ENCODE measurements at regions of chr1 and their contacts with region 1.

Region 1: DNA sequence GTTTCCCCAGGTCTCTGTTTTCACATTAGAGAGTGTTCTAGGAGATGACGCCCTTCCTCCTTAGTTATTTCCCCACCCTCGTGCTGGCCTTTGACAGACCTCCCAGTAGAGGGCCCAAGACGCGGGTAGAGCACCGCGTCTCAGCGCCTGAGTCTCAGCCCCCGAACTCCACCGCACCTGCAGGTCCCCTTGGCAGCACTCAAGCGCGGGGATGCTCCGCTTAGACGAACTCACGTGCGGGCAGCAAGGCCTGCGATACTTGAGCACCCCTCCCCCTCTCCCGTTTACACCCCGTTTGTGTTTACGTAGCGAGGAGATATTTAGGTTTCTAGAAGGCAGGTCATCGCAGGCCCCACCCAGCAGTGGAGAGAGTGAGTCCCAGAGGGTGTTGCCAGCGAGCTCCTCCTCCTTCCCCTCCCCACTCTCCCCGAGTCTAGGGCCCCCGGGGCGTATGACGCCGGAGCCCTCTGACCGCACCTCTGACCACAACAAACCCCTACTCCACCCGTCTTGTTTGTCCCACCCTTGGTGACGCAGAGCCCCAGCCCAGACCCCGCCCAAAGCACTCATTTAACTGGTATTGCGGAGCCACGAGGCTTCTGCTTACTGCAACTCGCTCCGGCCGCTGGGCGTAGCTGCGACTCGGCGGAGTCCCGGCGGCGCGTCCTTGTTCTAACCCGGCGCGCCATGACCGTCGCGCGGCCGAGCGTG is at the start of gene CD55:
- DNase-seq: peak; percentile 99
- H3K4me3 Mint-ChIP-seq: peak within 1 kb of the TSS; percentile 96
- H3K27ac Mint-ChIP-seq: peak within 1 kb of the TSS; percentile 98
- H3K4me1 Mint-ChIP-seq: peaks cover 34% of the 10 kb centered on the region
- H3K27me3 Mint-ChIP-seq: no peaks in the 10 kb centered on the region
- total RNA-seq, gene CD55: 62.1 to 66.0 TPM

Region 2: GRCh38 chr1:206925106-206925736 is 396.0 kb before region 1 on chr1:
- CTCF ChIA-PET with region 1: no interaction called
- intact Hi-C with region 1: loop called (anchors 10 kb)
- DNase-seq: peak; percentile 78
- H3K4me3 Mint-ChIP-seq: no peak overlapping the region
- H3K27ac Mint-ChIP-seq: no peak overlapping the region
- H3K4me1 Mint-ChIP-seq: peaks cover 24% of the 10 kb centered on the region
- H3K27me3 Mint-ChIP-seq: no peaks in the 10 kb centered on the region

Region 3: DNA sequence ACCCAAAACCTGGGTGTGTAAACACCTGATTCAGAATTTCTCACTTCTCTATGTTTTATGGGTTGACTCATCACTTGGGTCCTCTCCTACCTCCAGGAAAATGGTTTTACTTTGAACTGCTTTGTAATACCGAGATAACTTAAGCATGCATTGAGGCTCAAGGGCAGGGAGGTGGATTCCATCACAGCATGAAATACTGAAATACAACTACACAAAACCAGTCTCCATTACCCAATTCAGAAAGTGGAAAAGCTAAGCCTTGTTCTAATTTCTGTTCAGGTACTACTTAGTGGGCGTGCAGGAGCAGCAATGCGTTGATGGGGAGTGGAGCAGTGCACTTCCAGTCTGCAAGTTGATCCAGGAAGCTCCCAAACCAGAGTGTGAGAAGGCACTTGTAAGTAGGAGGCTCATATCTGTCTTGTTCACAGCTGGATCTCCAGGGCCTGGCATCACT is 223.3 kb before region 1 on chr1:
- CTCF ChIA-PET with region 1: no interaction called
- intact Hi-C with region 1: loop called (anchors 1 kb)
- DNase-seq: peak; percentile 65
- H3K4me3 Mint-ChIP-seq: no peak overlapping the region
- H3K27ac Mint-ChIP-seq: peak overlapping the region; percentile 86
- H3K4me1 Mint-ChIP-seq: peaks cover 9% of the 10 kb centered on the region
- H3K27me3 Mint-ChIP-seq: peaks cover 4% of the 10 kb centered on the region

Region 4: GRCh38 chr1:207205614-207206061 is 115.6 kb before region 1 on chr1:
- CTCF ChIA-PET with region 1: no interaction called
- intact Hi-C with region 1: no loop called
- DNase-seq: no peak
- H3K4me3 Mint-ChIP-seq: no peak overlapping the region
- H3K27ac Mint-ChIP-seq: no peak overlapping the region
- H3K4me1 Mint-ChIP-seq: peaks cover 5% of the 10 kb centered on the region
- H3K27me3 Mint-ChIP-seq: no peaks in the 10 kb centered on the region

Region 5: DNA sequence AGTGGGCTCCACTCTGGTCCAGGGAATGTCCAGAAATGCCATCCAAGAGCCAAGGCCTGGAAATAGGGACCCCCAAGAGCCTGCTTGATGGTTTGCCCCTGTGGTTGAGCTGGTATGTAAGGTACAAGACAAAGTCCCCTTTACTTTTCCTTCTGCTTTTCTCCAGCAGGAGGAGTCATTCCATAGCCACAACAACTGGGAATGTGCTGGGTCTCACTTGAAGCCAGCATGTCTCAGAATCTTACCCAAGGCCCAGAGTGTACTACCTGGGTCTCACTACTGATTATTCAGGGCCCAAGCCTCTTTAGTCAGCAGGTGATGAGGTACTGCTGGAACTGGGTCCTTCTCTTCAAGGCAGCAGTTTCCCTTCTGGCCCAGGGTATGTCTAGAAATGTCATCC is 61.8 kb before region 1 on chr1:
- CTCF ChIA-PET with region 1: no interaction called
- intact Hi-C with region 1: no loop called
- DNase-seq: no peak
- H3K4me3 Mint-ChIP-seq: no peak overlapping the region
- H3K27ac Mint-ChIP-seq: no peak overlapping the region
- H3K4me1 Mint-ChIP-seq: no peaks in the 10 kb centered on the region
- H3K27me3 Mint-ChIP-seq: no peaks in the 10 kb centered on the region

Region 6: GRCh38 chr1:207309775-207310273 is 11.4 kb before region 1 on chr1:
- CTCF ChIA-PET with region 1: no interaction called
- intact Hi-C with region 1: no loop called
- DNase-seq: peak; percentile 22
- H3K4me3 Mint-ChIP-seq: peak overlapping the region; percentile 56
- H3K27ac Mint-ChIP-seq: peak overlapping the region; percentile 37
- H3K4me1 Mint-ChIP-seq: peaks cover 19% of the 10 kb centered on the region
- H3K27me3 Mint-ChIP-seq: no peaks in the 10 kb centered on the region

Region 7: DNA sequence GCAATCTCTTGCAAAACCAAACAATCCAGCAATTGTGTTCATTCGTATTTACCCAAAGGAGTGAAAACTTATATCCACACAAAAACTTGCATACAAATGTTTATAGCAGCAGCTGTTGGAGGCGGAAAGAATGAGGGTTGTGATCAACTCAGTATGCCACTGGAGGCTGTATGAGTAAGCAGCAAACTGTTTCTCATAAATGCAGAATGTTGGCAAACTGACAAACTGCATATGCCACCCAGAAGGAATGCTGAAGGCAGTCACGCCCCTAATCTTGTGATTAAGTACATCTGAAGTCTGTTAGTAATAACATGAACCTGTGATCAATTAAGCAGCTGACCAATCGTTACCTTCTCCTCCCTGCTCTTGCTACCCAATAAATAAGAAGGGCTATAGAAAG is 72.4 kb after region 1 on chr1:
- CTCF ChIA-PET with region 1: no interaction called
- intact Hi-C with region 1: loop called (anchors 1 kb)
- DNase-seq: no peak
- H3K4me3 Mint-ChIP-seq: no peak overlapping the region
- H3K27ac Mint-ChIP-seq: no peak overlapping the region
- H3K4me1 Mint-ChIP-seq: peaks cover 20% of the 10 kb centered on the region
- H3K27me3 Mint-ChIP-seq: peaks cover 2% of the 10 kb centered on the region

Region 8: DNA sequence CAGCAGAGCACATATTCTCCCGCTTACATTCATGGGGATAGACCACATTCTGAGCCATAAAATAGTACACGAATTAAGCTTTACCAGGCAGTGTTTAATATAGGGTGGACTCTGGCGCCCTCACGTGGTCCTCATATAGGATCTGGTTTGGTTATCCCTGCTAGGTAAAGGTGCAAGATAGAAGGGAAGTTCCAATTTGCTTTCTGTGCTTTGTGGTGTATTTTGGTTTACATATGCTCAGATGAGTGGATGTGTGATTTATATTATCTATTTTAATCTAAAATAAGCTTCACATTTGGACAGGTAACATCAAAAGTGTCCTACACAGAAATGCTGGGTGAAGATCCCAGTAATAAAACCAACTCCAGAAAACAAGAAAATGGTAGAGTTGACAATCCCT is 178.3 kb after region 1 on chr1:
- CTCF ChIA-PET with region 1: no interaction called
- intact Hi-C with region 1: loop called (anchors 1 kb)
- DNase-seq: peak; percentile 88
- H3K4me3 Mint-ChIP-seq: no peak overlapping the region
- H3K27ac Mint-ChIP-seq: peak overlapping the region; percentile 51
- H3K4me1 Mint-ChIP-seq: peaks cover 26% of the 10 kb centered on the region
- H3K27me3 Mint-ChIP-seq: peaks cover 25% of the 10 kb centered on the region

Region 9: DNA sequence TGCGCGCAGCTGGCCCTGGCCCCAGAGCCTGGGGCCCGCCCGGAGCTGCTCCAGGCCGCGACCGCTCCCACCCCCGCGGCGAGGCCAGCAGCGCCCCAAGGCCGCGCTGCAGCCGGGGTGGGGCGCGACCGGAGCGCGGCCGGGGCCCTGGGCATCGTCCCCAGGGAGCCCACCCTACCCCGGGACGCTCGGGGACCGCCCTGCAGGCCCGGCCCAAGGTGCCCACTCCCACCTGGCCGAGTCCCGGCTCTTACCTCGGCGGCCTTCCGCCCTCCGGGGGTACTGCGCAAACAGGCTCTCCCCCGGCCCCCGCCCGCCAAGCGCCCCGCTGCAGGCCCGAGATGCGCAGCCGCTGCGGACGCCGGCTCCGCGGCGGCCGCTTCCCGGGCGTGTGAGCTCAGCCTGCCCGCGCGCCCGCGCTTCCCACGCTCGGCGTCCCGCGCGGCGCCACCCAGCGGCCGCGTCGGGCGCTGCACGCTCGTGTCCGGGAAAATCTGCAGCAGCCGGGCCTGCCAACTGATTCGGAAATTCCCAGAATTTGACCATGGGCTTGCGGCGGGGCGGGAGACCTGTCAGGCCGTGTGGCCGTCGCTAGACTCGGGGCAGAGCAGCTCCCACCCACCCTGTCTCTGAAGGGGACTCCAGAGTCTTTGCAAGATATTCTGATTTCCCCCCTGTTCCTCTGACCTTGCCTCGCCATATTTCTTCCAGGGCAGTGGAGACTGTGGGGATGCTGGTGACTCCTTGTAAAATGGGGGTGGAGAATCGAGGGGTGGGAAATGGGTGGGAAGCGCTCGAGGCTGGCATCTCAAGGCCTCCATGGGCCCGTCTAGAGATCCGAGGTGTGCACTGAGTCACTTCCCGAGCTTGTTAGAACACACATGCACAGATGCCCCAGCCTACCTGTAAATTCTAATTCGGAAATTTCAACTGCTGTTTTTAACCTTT is 547.8 kb after region 1 on chr1:
- CTCF ChIA-PET with region 1: no interaction called
- intact Hi-C with region 1: loop called (anchors 10 kb)
- DNase-seq: peak; percentile 63
- H3K4me3 Mint-ChIP-seq: peak overlapping the region; percentile 92
- H3K27ac Mint-ChIP-seq: peak overlapping the region; percentile 92
- H3K4me1 Mint-ChIP-seq: peaks cover 81% of the 10 kb centered on the region
- H3K27me3 Mint-ChIP-seq: no peaks in the 10 kb centered on the region